ENCODE measurements at regions of chr1 and their contacts with region 1.

Region 1: DNA sequence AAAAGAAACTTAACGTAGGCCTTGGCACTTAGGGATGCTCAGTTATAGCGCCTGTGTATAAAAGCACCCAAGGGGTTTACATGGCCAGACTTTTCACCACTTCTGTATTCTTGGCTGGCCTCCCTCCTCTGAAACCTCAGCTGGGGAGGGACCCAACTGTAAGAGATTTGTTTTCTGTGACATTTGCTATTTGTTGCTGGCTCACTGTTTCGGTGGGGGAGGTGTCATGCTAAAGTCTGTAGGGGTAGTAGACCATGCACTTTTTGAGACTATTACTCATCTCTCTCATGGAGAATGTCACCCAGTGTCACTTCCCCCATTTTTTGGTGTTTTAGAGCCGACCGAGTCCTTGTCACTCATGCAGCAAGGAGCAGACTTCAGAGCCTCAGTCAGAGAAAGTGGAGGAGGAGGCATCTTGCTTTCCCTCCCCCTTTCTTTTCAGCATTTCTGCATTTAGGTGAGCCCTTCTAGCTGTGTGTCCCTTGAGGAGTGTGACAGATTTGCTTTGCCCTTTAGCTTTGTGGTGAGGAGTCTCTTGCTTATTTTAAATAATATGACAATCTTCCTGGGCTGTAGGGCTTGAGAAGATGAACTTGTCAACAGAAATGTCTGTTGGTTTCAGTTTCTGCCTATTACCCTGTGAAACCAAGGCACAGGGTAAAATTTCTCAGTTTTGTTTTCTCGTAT is 160.1 kb downstream of the FASLG start:
- DNase-seq: peak; percentile 91
- H3K4me3 ChIP-seq: peak overlapping the region; percentile 59
- H3K27ac ChIP-seq: peak overlapping the region; percentile 88
- H3K4me1 ChIP-seq: peaks cover 53% of the 10 kb centered on the region
- CTCF ChIP-seq: no peak

Region 2: GRCh38 chr1:172733815-172734214 is 85.2 kb before region 1 on chr1:
- CTCF ChIA-PET with region 1: no interaction called
- POLR2A ChIA-PET with region 1: no interaction called
- intact Hi-C with region 1: no loop called
- DNase-seq: no peak
- H3K4me3 ChIP-seq: no peak overlapping the region
- H3K27ac ChIP-seq: no peak overlapping the region
- H3K4me1 ChIP-seq: no peaks in the 10 kb centered on the region
- CTCF ChIP-seq: no peak

Region 3: GRCh38 chr1:172778456-172779455 is 40.2 kb before region 1 on chr1:
- CTCF ChIA-PET with region 1: no interaction called
- POLR2A ChIA-PET with region 1: interaction called, 15 read pairs
- intact Hi-C with region 1: loop called (anchors 2 kb)
- DNase-seq: peak; percentile 31
- H3K4me3 ChIP-seq: no peak overlapping the region
- H3K27ac ChIP-seq: no peak overlapping the region
- H3K4me1 ChIP-seq: peaks cover 19% of the 10 kb centered on the region
- CTCF ChIP-seq: peak; percentile 63

Region 4: DNA sequence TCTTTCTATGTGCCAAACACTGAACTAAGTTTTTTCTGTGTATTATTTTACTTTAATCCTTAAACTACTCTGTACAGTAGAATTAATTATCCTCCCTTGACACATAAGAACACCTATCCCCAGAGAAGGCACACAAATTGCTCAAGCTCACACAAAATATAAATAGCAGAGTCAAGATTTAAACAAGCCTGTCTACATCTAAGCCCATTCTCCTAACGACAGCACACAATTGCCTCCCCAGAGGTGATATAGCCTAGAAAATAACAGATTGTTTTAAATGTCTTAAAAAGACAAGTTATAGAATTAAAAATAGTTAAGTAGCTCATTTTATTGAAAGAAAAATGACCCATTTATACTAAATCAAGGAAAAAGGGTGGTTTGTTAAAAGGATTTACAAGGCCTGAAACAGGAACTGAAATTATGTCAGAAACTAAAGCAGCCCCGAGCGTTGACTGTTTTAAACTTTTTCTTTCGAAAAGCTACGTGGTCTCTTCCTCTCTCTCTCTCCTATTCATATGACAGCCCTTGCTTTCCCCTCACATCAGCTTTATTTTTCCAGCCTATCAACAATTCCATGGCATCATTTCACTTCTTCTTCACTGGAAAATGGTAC is 201.3 kb after region 1 on chr1:
- CTCF ChIA-PET with region 1: no interaction called
- POLR2A ChIA-PET with region 1: interaction called, 6 read pairs
- intact Hi-C with region 1: loop called (anchors 2 kb)
- DNase-seq: peak; percentile 86
- H3K4me3 ChIP-seq: peak overlapping the region; percentile 33
- H3K27ac ChIP-seq: peak overlapping the region; percentile 84
- H3K4me1 ChIP-seq: peaks cover 54% of the 10 kb centered on the region
- CTCF ChIP-seq: no peak

Region 5: GRCh38 chr1:173476664-173477285 is 657.8 kb after region 1 on chr1:
- CTCF ChIA-PET with region 1: no interaction called
- POLR2A ChIA-PET with region 1: no interaction called
- intact Hi-C with region 1: loop called (anchors 1 kb)
- DNase-seq: peak; percentile 95
- H3K4me3 ChIP-seq: peak overlapping the region; percentile 99
- H3K27ac ChIP-seq: peak overlapping the region; percentile 63
- H3K4me1 ChIP-seq: peaks cover 30% of the 10 kb centered on the region
- CTCF ChIP-seq: no peak

Measured in OCI-LY7 (cell line).